CD14-positive monocyte (primary cell): ENCODE measurements at regions of chr6 and their contacts with region 1.

Region 1: GRCh38 chr6:5670811-5671561 is 335.7 kb downstream of the NRN1 start:
- DNase-seq: peak; percentile 93 to 98 (median 97)
- H3K4me3 ChIP-seq: peak overlapping the region in 1 of 3 experiments; percentile 49
- H3K4me3 Mint-ChIP-seq: peak overlapping the region; percentile 7 to 68
- H3K27ac ChIP-seq: peak overlapping the region; percentile 92 to 93
- H3K27ac Mint-ChIP-seq: peak overlapping the region; percentile 94 to 98 (median 98)
- H3K4me1 ChIP-seq: peaks cover 48 to 56% of the 10 kb centered on the region in 2 donors
- H3K4me1 Mint-ChIP-seq: peaks cover 50% of the 10 kb centered on the region
- H3K27me3 ChIP-seq: no peaks in the 10 kb centered on the region
- H3K27me3 Mint-ChIP-seq: peaks cover 0 to 1% (median 0%) of the 10 kb centered on the region in 3 donors
- CTCF ChIP-seq: no peak

Region 2: DNA sequence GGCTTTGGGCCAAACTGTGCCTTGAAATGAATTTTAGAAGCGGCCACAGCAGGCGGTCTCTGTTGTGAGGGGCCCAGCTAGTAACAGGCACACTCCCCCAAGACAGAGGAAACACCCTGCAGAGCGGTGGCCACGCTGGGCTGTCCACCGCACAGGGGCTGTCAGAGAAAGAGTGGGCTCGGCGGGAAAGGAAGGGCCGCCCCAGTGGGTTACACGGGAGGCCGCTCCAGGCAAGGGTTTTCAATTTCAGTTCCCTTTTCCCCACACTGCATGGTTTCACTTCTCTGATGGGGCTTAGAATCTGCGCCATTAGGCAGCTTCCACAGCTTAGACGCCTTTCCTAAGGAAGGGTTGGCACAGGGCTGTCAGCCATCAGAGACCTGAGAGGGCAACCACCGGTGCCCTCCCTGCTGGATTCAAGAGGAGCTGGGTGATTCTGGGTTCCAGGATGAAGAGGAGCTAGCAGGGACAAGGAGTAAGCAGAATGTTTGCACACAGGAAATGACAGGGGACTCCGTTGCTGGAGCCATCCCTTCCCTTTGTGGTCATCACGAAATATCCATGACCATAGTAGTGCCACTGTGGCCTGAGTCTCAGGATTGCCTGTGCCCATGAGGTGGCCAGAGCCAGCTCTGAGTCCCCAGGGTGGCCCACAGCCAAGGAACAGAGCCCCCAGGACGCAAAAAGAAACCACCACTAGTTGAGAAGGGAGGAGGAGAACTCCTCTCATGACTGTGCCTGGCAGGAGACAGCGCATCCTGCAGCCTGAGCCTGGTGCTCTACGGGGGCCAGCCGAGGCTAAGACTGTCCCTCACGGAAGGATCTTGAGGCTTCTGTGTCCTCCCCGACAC is 53.1 kb after region 1 on chr6:
- intact Hi-C with region 1: loop called (anchors 5 to 10 kb)
- DNase-seq: peak; percentile 85 to 88 (median 85)
- H3K4me3 ChIP-seq: peak overlapping the region; percentile 12 to 44 (median 30)
- H3K4me3 Mint-ChIP-seq: peak overlapping the region; percentile 77 to 86
- H3K27ac ChIP-seq: peak overlapping the region; percentile 97 to 98
- H3K27ac Mint-ChIP-seq: peak overlapping the region; percentile 99 to 100 (median 99)
- H3K4me1 ChIP-seq: peaks cover 35 to 36% of the 10 kb centered on the region in 2 donors
- H3K4me1 Mint-ChIP-seq: peaks cover 43% of the 10 kb centered on the region
- H3K27me3 ChIP-seq: no peaks in the 10 kb centered on the region
- H3K27me3 Mint-ChIP-seq: no peaks in the 10 kb centered on the region
- CTCF ChIP-seq: no peak